Dorsolateral prefrontal cortex (tissue), 120 donors: ENCODE measurements at regions of chr20 and their contacts with region 1.

Region 1: DNA sequence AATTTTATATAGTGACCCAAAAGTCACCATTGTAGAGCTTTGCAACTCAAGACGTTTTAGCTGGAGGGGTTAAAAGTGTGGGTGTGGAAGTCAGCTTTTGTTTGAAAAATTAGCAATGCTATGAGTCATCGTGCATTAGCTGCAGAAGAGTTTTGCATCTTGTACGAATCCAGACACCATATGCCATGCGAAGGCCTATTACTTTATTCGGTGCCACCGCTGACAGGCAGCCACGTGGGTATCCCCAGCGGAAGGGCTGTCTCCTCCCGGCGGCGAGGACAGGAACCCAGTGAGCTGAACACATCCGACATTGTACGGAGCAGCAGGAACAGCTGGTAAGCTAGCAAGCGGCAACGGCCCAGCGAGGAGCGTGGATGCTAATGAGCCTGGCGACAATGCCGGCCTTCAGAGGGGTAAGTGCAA is 84.4 kb downstream of the INSM1 start:
- DNase-seq: peak; percentile 66 to 98 (median 96)
- H3K4me3 ChIP-seq: peak overlapping the region in 53 of 59 donors; percentile 2 to 55 (median 31)
- H3K27ac ChIP-seq: peak overlapping the region in 58 of 59 donors; percentile 20 to 92 (median 82)
- H3K27me3 ChIP-seq: no peaks in the 10 kb centered on the region
- CTCF ChIP-seq: peak in 41 of 56 donors; percentile 9 to 62 (median 32)

Region 2: DNA sequence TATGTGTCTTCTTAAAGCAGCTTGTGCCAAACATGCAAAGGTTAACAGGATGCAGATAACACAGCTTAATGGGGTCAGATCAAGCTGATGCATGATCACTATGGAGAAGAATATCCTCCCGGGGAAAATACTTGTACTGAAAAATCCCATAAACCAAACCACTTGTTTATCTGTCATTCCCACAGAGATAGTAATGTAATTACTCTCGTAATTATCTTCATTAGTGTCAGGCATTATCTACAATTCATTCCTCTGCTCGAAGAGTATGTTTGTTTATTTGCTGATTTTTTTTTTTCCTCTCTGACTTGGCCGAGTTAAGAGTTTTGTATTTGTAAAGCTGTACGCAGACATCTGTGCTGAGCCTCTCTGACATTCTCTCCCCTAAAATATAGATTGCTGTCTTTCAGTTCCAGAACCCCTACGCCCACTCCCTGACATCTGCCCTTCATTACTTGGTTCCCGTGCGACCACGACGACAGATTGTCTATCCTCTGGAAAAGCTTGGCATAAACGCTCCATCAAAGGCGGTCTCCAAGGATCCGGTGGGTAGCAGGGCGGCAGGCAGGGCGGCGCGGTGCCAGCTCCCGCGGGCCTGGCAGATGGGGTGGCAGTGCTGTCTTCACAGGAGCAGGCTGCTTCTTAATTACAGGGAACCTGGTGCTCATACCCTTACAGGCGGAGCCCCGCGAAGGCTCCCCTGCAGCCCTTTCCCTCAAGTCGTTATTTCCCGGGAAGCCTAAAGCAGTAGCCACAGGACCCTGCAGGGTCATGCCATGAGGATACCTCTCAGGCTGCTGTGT is 252.7 kb before region 1 on chr20:
- intact Hi-C with region 1: no loop called
- DNase-seq: peak in 1 of 10 donors; percentile 93
- H3K4me3 ChIP-seq: peak overlapping the region in 31 of 59 donors; percentile 2 to 52 (median 28)
- H3K27ac ChIP-seq: peak overlapping the region in 1 of 59 donors; percentile 14
- H3K27me3 ChIP-seq: no peaks in the 10 kb centered on the region
- CTCF ChIP-seq: no peak

Region 3: GRCh38 chr20:20489648-20490341 is 37.5 kb after region 1 on chr20:
- intact Hi-C with region 1: loop called (anchors 5 kb)
- DNase-seq: no peak
- H3K4me3 ChIP-seq: no peak overlapping the region
- H3K27ac ChIP-seq: peak overlapping the region in 14 of 59 donors; percentile 3 to 64 (median 42)
- H3K27me3 ChIP-seq: no peaks in the 10 kb centered on the region
- CTCF ChIP-seq: no peak